ENCODE measurements at regions of chr1 and their contacts with region 1.

Region 1: GRCh38 chr1:35202048-35202719 is 9.2 kb upstream of the SFPQ start:
- DNase-seq: peak; percentile 56
- ATAC-seq: peak; percentile 89 to 96

Region 2: DNA sequence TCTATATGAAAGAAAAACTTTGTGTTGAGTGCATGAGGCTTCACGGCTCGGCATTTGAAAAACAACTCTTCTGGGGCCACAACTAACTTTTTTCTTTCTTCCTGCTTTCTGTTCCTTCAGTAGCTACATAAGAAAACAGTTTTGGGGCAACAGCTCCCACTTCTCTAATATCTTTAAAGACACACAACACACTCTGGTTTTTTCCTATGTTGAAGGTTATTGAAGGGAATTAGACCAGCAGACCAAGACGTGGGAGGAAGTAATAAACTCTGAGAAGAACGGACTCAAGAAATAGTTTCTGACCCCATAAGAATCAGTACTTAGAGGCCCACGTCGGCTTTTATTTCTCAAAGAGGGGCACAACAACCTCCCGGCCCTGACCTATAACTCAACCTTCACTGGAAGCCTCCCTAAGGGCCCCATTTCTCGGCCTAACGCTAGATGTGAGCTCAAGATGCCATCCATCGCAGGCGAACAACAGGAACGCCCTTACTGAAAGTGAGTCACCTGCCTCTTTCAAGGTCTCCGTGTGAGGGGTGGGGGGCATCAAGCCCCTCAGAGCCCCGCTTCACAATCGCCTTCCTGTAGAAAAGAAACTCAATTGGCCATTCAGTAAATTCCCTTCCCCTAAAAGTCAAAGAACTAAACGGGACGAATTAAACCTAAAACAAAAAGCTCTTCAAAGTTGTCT is 171.3 kb before region 1 on chr1:
- intact Hi-C with region 1: loop called in 1 of 2 experiments (anchors 5 kb)
- DNase-seq: peak; percentile 32
- ATAC-seq: peak; percentile 16 to 69

Region 3: DNA sequence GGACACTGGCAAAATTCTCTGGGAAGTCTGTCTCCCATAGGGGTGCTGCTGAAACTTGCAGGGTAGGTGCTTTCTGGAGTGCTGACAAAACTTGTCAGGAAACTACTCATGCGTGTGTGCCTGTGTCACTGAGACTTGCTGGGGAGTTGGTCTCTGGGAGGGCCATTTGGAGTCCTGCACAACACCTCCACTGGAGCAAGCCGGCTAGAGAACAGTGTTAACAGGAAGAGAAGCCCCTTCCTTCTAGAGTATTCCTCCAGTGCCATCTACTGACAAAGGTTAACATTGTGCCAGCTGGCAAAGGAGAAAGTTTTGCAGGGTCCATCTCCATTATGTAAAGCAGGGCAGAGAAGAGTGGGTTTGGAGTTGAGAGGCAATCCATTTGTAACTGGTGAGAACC is 96.3 kb after region 1 on chr1:
- intact Hi-C with region 1: loop called in 1 of 2 experiments (anchors 5 kb)
- DNase-seq: no peak
- ATAC-seq: peak; percentile 78 to 83

Region 4: DNA sequence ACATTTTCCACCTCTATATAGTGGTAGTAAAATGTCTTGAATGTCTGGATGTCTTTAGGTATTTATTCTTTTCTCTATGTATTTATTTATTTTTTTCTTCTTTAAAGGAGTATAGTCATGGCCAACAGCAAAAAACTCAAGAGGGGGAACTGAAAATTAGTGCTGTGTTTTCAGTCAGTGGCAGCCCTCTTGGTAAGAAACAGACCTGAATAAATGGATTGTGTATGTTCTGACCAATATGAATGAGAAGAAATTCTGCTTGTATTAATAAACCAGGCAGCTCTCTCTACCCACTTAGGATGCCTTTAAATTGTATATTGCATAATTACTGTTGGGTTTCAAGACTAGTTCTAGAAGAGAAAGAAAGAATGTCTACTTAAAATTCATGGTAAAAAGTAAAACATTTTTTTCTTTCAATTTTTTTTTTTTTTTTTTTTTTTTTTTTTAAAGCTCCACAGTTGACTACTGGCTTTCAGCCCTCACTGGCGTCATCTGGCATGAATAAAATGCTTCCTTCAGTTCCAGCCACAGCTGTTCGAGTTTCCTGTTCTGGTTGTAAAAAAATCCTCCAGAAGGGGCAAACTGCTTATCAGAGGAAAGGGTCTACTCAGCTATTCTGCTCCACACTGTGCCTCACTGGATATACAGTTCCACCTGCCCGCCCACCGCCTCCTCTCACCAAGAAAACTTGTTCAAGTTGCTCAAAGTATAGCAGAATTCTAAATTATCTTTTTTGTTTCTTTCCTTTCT is 167.9 kb after region 1 on chr1:
- intact Hi-C with region 1: loop called in 1 of 2 experiments (anchors 10 kb)
- DNase-seq: peak; percentile 82
- ATAC-seq: peak; percentile 82 to 87